ENCODE measurements at regions of chr4 and their contacts with region 1.

Region 1: GRCh38 chr4:12633053-12633651 is 851.0 kb downstream of the RAB28 start:
- DNase-seq: peak in 1 of 2 donors; percentile 67
- H3K4me3 ChIP-seq: no peak overlapping the region
- H3K27ac ChIP-seq: no peak overlapping the region
- H3K4me1 ChIP-seq: no peaks in the 10 kb centered on the region
- H3K27me3 ChIP-seq: no peaks in the 10 kb centered on the region
- CTCF ChIP-seq: peak; percentile 43 to 74 (median 67)

Region 2: DNA sequence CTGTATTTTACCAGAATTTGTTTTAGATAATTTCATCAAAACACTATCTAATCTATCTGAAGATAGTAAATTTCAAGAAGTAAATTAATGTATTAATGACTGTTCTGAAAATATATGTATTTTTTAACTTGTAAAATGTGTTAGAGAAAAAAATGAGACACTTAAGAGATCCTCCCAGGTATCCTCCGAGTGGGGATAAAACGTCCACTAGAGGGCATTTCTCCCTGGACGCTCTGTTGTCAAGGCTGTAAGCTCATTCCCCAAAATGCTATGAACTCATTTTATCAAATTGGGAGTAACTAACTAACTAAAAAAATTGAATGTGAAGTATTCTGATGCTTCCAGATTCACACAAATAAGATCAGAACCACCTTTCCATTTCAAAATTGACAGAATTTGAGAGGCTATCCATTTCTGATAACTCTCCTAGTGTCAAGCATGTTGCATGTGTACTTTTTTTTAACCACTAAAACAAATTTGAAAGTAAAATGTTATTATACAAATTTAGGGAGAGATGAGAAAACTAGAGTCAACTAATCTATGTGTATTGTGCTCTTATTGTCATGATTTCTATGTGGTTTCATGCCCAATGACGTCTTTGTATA is 867.2 kb before region 1 on chr4:
- intact Hi-C with region 1: loop called (anchors 5 kb)
- DNase-seq: no peak
- H3K4me3 ChIP-seq: no peak overlapping the region
- H3K27ac ChIP-seq: no peak overlapping the region
- H3K4me1 ChIP-seq: no peaks in the 10 kb centered on the region
- H3K27me3 ChIP-seq: no peaks in the 10 kb centered on the region
- CTCF ChIP-seq: peak in 2 of 3 experiments; percentile 51 to 54

Region 3: DNA sequence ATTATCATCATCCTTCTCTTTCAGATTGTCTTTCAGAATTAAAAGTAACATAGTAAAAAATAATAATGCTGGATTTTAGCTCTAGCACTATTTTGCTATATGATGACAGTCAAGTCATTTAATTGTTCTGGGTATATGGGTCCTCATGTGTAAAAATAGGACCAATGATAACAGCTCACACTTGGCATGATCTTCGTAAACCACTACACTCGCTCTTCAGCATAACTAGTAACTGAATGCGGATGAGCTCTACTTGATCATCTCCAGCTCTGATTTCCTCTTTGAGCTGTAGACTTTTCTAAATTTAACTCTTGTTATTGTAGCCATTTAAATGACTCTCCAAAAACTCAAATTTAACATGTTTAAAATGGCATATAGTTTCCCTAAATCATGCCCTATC is 372.7 kb before region 1 on chr4:
- intact Hi-C with region 1: no loop called
- DNase-seq: no peak
- H3K4me3 ChIP-seq: no peak overlapping the region
- H3K27ac ChIP-seq: no peak overlapping the region
- H3K4me1 ChIP-seq: no peaks in the 10 kb centered on the region
- H3K27me3 ChIP-seq: no peaks in the 10 kb centered on the region
- CTCF ChIP-seq: no peak

Region 4: GRCh38 chr4:12562021-12562420 is 71.1 kb before region 1 on chr4:
- intact Hi-C with region 1: no loop called
- DNase-seq: no peak
- H3K4me3 ChIP-seq: no peak overlapping the region
- H3K27ac ChIP-seq: no peak overlapping the region
- H3K4me1 ChIP-seq: no peaks in the 10 kb centered on the region
- H3K27me3 ChIP-seq: no peaks in the 10 kb centered on the region
- CTCF ChIP-seq: no peak

Region 5: DNA sequence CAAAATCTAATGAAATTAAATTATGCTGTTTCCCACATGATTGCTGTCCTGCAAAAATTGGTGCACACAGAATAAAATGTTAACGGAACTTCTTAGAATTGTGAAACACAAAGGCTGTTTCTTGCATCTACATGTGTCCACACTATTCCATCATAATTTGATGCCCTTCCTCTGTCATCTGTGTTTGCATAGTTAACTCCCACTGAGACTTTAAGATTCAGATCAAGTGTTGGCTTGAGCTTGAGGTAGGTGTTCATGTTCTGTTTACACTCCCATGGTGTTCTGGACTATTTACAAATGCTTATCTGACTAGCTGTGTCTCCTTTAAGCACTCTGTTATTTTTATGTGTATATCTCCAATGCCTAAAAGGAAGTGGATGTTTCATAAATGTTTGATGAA is 228.2 kb after region 1 on chr4:
- intact Hi-C with region 1: no loop called
- DNase-seq: no peak
- H3K4me3 ChIP-seq: no peak overlapping the region
- H3K27ac ChIP-seq: no peak overlapping the region
- H3K4me1 ChIP-seq: no peaks in the 10 kb centered on the region
- H3K27me3 ChIP-seq: no peaks in the 10 kb centered on the region
- CTCF ChIP-seq: no peak

Measured in ascending aorta (tissue), 2 donors.